ENCODE measurements at regions of chr1 and their contacts with region 1.

Region 1: GRCh38 chr1:65812065-65812464 is 19.4 kb downstream of the PDE4B start:
- DNase-seq: peak; percentile 77
- H3K4me3 Mint-ChIP-seq: peak overlapping the region; percentile 6
- H3K27ac Mint-ChIP-seq: peak overlapping the region; percentile 68
- H3K4me1 Mint-ChIP-seq: peaks cover 43% of the 10 kb centered on the region
- H3K27me3 Mint-ChIP-seq: peaks cover 13% of the 10 kb centered on the region

Region 2: DNA sequence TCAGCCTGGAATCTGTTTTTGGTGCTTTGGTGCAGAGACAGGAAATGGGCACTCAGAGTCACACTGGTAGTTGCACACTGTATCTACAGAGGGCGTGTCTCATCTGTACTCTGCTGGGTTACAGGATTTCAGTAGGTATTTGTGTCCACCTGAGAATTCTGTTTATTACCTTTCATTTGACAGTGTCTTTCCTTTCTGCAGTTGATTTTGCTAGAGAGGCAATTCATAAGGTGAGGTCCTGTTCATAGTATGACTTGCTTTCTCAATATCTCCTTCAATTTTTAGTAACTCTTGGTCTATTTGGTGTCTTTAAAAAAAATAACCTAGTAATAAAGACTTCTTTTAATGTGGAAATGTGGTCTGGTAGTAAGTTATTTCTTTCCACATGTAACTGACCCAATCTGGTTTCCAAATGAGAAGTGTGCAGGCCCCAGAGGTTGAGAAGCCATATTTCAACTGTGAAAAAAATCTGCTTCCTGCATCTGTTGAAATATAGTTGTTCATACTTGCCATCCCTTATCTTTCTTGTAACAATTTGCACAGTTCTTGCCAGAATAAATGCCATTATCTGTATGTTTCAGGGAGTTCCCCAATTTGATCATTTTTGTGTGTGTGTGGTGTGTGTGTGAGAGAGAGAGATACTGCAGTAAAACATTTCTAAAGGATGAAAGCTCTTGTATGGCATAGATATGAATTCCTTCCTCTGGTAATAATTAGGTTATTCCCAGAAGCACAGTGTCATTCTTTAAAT is 581.2 kb before region 1 on chr1:
- intact Hi-C with region 1: loop called (anchors 1 kb)
- DNase-seq: no peak
- H3K4me3 Mint-ChIP-seq: no peak overlapping the region
- H3K27ac Mint-ChIP-seq: peak overlapping the region; percentile 81
- H3K4me1 Mint-ChIP-seq: peaks cover 32% of the 10 kb centered on the region
- H3K27me3 Mint-ChIP-seq: no peaks in the 10 kb centered on the region

Region 3: GRCh38 chr1:65795311-65795710 is 16.8 kb before region 1 on chr1:
- intact Hi-C with region 1: loop called (anchors 2 kb)
- DNase-seq: no peak
- H3K4me3 Mint-ChIP-seq: no peak overlapping the region
- H3K27ac Mint-ChIP-seq: no peak overlapping the region
- H3K4me1 Mint-ChIP-seq: peaks cover 11% of the 10 kb centered on the region
- H3K27me3 Mint-ChIP-seq: peaks cover 56% of the 10 kb centered on the region

Region 4: DNA sequence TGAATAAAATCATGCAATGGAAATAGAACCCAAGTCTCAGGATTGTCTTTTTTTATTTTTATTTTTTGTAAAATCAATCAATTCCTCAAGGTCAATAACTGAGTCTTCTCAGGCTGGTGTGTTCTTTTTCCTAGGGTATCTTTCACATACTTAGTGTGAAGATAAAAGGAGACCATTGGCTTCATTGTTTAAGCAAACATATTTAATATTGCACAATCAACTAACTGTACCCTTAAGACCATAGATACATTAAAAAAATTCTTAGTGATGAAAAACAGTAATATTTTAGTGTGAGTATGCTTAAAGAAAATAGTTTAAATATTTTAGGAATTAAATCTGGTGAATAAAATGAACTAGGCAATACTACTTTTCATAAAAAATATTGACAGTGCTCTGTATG is 12.0 kb after region 1 on chr1:
- intact Hi-C with region 1: no loop called
- DNase-seq: no peak
- H3K4me3 Mint-ChIP-seq: no peak overlapping the region
- H3K27ac Mint-ChIP-seq: no peak overlapping the region
- H3K4me1 Mint-ChIP-seq: no peaks in the 10 kb centered on the region
- H3K27me3 Mint-ChIP-seq: peaks cover 44% of the 10 kb centered on the region

Region 5: GRCh38 chr1:65846866-65847265 is 34.8 kb after region 1 on chr1:
- intact Hi-C with region 1: no loop called
- DNase-seq: no peak
- H3K4me3 Mint-ChIP-seq: no peak overlapping the region
- H3K27ac Mint-ChIP-seq: no peak overlapping the region
- H3K4me1 Mint-ChIP-seq: no peaks in the 10 kb centered on the region
- H3K27me3 Mint-ChIP-seq: peaks cover 7% of the 10 kb centered on the region

Region 6: DNA sequence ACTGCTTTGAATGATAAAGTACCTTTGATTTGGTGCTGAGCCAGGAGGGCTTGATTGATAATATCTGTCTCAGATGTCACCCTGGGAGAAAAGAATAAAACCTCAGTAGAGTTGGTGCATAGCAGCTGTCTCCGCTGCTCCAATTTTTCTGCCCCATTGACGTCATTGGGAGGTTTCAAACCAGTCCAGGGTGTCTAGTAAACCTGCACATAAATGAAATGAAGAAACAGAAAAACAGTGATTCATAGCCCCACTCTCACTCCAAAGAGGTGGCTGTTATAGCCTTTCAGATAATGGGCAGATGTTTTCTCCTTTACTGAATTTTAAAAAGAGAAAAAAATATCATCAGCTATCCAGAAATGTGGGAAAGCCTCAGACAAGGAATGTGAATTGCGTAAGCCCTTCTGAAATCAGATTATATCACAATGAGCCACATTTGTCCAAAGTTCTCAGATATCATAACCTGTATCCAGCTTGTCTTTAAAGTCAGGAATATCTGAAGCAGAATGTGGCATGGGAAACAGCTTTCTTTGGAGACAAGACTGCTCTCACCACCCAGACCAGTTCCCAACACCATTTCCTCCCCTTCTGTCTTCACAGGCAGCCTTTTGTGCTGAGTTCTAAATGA is 370.6 kb after region 1 on chr1:
- intact Hi-C with region 1: loop called (anchors 1 kb)
- DNase-seq: peak; percentile 33
- H3K4me3 Mint-ChIP-seq: peak overlapping the region; percentile 51
- H3K27ac Mint-ChIP-seq: peak overlapping the region; percentile 18
- H3K4me1 Mint-ChIP-seq: peaks cover 51% of the 10 kb centered on the region
- H3K27me3 Mint-ChIP-seq: peaks cover 2% of the 10 kb centered on the region

Region 7: DNA sequence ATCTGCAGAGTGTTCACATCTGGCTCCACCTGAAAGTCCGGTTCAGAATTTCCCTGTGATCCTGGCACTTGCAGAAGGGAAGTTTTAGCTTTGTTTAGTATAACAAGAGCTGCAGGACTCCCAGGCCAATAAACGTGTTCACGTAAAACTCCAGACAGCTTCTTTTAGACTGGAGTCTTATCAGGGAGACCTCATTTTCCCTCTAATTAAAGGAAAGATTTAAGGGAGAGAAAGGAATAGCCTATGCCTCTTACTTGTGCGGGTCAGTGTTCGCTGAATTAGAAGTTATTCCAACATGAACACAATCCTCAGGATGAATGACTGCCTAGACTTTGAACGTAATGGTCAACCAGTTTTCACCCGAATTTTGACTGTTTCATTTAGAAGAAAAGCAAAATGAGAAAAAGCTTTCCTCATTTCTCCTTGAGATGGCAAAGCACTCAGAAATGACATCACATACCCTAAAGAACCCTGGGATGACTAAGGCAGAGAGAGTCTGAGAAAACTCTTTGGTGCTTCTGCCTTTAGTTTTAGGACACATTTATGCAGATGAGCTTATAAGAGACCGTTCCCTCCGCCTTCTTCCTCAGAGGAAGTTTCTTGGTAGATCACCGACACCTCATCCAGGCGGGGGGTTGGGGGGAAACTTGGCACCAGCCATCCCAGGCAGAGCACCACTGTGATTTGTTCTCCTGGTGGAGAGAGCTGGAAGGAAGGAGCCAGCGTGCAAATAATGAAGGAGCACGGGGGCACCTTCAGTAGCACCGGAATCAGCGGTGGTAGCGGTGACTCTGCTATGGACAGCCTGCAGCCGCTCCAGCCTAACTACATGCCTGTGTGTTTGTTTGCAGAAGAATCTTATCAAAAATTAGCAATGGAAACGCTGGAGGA is 519.8 kb after region 1 on chr1:
- intact Hi-C with region 1: loop called (anchors 2 kb)
- DNase-seq: peak; percentile 35
- H3K4me3 Mint-ChIP-seq: peak overlapping the region; percentile 98
- H3K27ac Mint-ChIP-seq: peak overlapping the region; percentile 95
- H3K4me1 Mint-ChIP-seq: peaks cover 60% of the 10 kb centered on the region
- H3K27me3 Mint-ChIP-seq: no peaks in the 10 kb centered on the region

Region 8: GRCh38 chr1:66788231-66788939 is 976.3 kb after region 1 on chr1:
- intact Hi-C with region 1: loop called (anchors 1 kb)
- DNase-seq: peak; percentile 25
- H3K4me3 Mint-ChIP-seq: peak overlapping the region; percentile 63
- H3K27ac Mint-ChIP-seq: peak overlapping the region; percentile 57
- H3K4me1 Mint-ChIP-seq: peaks cover 24% of the 10 kb centered on the region
- H3K27me3 Mint-ChIP-seq: no peaks in the 10 kb centered on the region

Region 9: GRCh38 chr1:67685067-67685557 is 1873.0 kb after region 1 on chr1 and contains the start of gene GADD45A:
- intact Hi-C with region 1: loop called (anchors 5 kb)
- DNase-seq: peak; percentile 96
- H3K4me3 Mint-ChIP-seq: peak within 1 kb of the TSS; percentile 91
- H3K27ac Mint-ChIP-seq: peak within 1 kb of the TSS; percentile 99
- H3K4me1 Mint-ChIP-seq: peaks cover 45% of the 10 kb centered on the region
- H3K27me3 Mint-ChIP-seq: no peaks in the 10 kb centered on the region
- total RNA-seq, gene GADD45A: 47.3 and 48.2 TPM in 2 replicates